ENCODE measurements at regions of chr1 and their contacts with region 1.

Region 1: DNA sequence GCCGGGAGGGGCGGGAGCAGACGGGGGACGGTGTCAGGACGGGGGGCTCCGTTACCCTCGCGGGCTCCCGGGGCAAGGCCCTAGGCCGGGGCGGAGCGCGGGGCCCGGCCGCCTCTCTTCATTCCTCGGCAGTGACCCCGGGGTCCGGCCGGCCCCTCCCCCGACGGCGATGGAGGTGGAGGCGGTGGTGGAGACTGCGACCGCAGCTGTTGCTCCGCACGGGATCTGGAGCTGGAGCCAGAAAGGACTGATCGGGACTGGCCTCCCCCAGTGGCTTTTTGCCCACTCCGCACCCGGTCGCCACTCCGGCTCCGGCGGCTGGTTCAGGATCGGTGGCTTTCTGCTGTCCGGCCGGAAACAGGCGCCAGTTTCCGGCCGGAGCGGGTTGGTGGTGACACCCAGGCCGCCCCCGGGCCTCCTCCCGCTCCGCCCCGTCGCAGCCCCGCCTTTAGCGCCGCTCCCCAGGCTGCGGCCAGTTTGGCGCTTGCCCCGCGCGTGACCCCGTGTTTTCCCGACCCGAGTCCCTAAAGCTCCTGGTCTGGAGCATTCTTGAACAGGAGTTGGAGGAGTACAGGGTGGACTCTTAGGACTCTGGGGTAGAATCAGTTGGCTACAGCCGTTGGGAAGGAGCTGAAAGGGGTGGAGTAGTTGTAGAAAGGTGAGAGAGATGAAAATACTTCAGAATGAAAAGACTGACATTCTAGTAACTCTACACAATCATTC is at the start of gene OTUD7B:
- DNase-seq: peak; percentile 88
- ATAC-seq: peak; percentile 62
- H3K4me3 Mint-ChIP-seq: peak within 1 kb of the TSS; percentile 99
- H3K27ac Mint-ChIP-seq: peak within 1 kb of the TSS; percentile 99
- H3K4me1 Mint-ChIP-seq: peaks cover 37% of the 10 kb centered on the region
- H3K27me3 Mint-ChIP-seq: no peaks in the 10 kb centered on the region
- total RNA-seq, gene OTUD7B: 18.5 to 20.1 TPM

Region 2: DNA sequence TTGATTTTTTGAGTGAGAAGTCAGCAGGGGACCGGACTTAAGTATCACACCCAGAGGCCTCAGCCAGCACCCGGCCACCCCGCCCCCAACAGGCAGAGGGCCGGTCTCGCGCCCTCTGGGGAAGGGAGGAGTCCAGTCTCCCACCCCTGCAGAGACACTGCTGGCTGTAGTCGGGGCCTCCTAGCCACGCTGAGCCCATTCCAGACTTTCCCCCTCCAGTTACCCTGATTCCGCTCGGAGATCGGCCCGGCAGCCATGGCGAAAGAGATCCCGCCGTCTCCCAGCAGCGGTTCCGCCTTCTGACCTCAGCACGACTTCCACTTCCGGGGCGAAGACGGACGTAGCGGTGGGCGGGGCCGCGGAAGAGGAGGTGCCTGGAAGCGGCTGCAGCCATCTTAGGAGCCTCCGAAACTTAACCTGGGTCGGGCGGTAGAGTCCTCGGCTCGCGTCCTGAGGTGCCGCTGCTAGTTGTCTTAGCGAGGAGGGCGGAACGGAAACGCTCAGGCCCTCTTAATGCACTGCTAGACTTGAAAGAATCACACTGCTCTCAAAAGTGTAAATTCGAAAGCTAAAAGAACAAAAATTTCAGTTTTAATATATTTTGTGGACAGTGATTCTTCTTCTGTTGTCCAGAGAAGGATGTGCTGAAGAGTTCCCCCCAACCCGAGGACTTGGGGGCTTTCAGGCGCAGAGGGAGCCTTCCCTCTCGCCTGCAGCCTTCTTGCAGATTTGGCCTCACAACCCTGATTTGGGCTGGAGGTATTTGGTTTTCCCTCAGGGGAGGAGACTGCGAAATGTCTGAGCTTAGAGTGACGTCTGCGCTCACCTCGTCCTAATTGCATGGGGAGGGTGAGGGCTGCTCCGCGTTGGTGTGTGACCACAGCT is 82.8 kb before region 1 on chr1 and contains the start of gene SF3B4:
- CTCF ChIA-PET with region 1: no interaction called
- POLR2A ChIA-PET with region 1: no interaction called
- intact Hi-C with region 1: loop called in 1 of 2 experiments (anchors 1 kb)
- DNase-seq: peak; percentile 97
- ATAC-seq: peak; percentile 97
- H3K4me3 Mint-ChIP-seq: peak within 1 kb of the TSS; percentile 97
- H3K27ac Mint-ChIP-seq: peak within 1 kb of the TSS; percentile 96
- H3K4me1 Mint-ChIP-seq: peaks cover 43% of the 10 kb centered on the region
- H3K27me3 Mint-ChIP-seq: peaks cover 3% of the 10 kb centered on the region
- total RNA-seq, gene SF3B4: 68.6 to 71.9 TPM

Region 3: DNA sequence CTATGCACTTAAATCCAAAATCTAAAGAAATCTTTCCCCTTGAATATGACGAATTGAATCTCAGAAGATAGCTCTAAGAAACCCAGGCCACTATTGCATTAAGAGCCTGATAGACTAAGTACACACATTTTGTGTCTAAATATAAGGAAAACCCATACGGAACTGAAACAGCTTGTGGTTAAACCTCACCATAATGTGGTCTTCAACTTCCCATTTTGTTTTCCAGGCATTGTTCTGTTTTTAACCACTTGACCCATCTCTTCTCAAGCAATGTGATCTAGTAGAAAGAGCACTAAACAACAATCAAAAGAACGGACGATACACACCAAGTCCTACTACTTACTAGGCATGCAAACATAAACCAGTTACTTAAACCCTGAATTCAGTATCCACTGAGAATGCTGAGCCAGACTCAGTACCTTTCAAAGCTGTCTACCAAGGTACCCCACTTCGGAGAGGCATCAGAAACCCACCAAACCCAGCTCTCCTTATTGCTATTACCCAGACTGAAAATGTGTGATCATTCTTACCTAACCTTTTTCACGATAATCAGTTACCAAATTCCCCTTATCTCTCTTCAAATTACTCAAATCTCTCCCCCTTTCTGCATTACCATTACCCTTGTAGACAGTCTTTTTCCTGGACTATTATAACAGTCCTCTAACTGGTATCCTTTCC is 12.8 kb before region 1 on chr1:
- CTCF ChIA-PET with region 1: interaction called, 34 read pairs
- POLR2A ChIA-PET with region 1: interaction called, 11 read pairs
- intact Hi-C with region 1: loop called (anchors 1 kb)
- DNase-seq: no peak
- ATAC-seq: peak; percentile 28
- H3K4me3 Mint-ChIP-seq: no peak overlapping the region
- H3K27ac Mint-ChIP-seq: peak overlapping the region; percentile 55
- H3K4me1 Mint-ChIP-seq: peaks cover 57% of the 10 kb centered on the region
- H3K27me3 Mint-ChIP-seq: no peaks in the 10 kb centered on the region

Region 4: GRCh38 chr1:150121236-150121862 is 110.8 kb after region 1 on chr1:
- CTCF ChIA-PET with region 1: no interaction called
- POLR2A ChIA-PET with region 1: no interaction called
- intact Hi-C with region 1: no loop called
- DNase-seq: no peak
- ATAC-seq: no peak
- H3K4me3 Mint-ChIP-seq: no peak overlapping the region
- H3K27ac Mint-ChIP-seq: no peak overlapping the region
- H3K4me1 Mint-ChIP-seq: peaks cover 14% of the 10 kb centered on the region
- H3K27me3 Mint-ChIP-seq: no peaks in the 10 kb centered on the region

Region 5: GRCh38 chr1:150134537-150134936 is 124.0 kb after region 1 on chr1:
- CTCF ChIA-PET with region 1: no interaction called
- POLR2A ChIA-PET with region 1: no interaction called
- intact Hi-C with region 1: no loop called
- DNase-seq: no peak
- ATAC-seq: no peak
- H3K4me3 Mint-ChIP-seq: no peak overlapping the region
- H3K27ac Mint-ChIP-seq: no peak overlapping the region
- H3K4me1 Mint-ChIP-seq: no peaks in the 10 kb centered on the region
- H3K27me3 Mint-ChIP-seq: no peaks in the 10 kb centered on the region

Region 6: DNA sequence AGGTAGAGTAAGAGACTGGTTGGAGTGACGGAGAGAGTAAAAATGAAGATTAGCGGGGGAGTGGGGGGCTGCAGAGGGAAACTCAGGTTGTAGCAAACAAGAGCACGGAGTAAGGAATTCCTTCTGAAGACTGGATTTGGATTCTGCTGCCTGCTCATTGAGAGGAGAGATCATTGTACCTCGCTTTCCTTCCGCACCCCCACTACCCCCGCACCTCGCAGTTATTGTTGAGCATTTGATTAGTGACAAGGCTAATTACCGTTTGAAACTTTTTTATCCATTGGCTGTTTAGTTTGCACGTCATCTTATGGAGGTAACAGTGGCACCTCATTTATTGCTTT is 311.2 kb after region 1 on chr1:
- CTCF ChIA-PET with region 1: no interaction called
- POLR2A ChIA-PET with region 1: no interaction called
- intact Hi-C with region 1: loop called in 1 of 2 experiments (anchors 1 kb)
- DNase-seq: no peak
- ATAC-seq: no peak
- H3K4me3 Mint-ChIP-seq: peak overlapping the region; percentile 93
- H3K27ac Mint-ChIP-seq: peak overlapping the region; percentile 100
- H3K4me1 Mint-ChIP-seq: peaks cover 27% of the 10 kb centered on the region
- H3K27me3 Mint-ChIP-seq: no peaks in the 10 kb centered on the region